ENCODE measurements at regions of chr6 and their contacts with region 1.

Region 1: GRCh38 chr6:69796642-69797390 is at the start of gene LMBRD1:
- DNase-seq: peak; percentile 98
- H3K4me3 Mint-ChIP-seq: peak within 1 kb of the TSS; percentile 83
- H3K27ac Mint-ChIP-seq: peak within 1 kb of the TSS; percentile 95
- H3K4me1 Mint-ChIP-seq: peaks cover 34% of the 10 kb centered on the region
- H3K27me3 Mint-ChIP-seq: no peaks in the 10 kb centered on the region
- total RNA-seq, gene LMBRD1: 23.5 to 30.5 TPM

Region 2: GRCh38 chr6:69622230-69622629 is 174.6 kb before region 1 on chr6:
- CTCF ChIA-PET with region 1: no interaction called
- POLR2A ChIA-PET with region 1: no interaction called
- DNase-seq: no peak
- H3K4me3 Mint-ChIP-seq: no peak overlapping the region
- H3K27ac Mint-ChIP-seq: no peak overlapping the region
- H3K4me1 Mint-ChIP-seq: no peaks in the 10 kb centered on the region
- H3K27me3 Mint-ChIP-seq: peaks cover 13% of the 10 kb centered on the region

Region 3: GRCh38 chr6:69775585-69775849 is 21.3 kb before region 1 on chr6:
- CTCF ChIA-PET with region 1: interaction called, 24 read pairs
- POLR2A ChIA-PET with region 1: no interaction called
- DNase-seq: no peak
- H3K4me3 Mint-ChIP-seq: no peak overlapping the region
- H3K27ac Mint-ChIP-seq: no peak overlapping the region
- H3K4me1 Mint-ChIP-seq: peaks cover 10% of the 10 kb centered on the region
- H3K27me3 Mint-ChIP-seq: no peaks in the 10 kb centered on the region

Region 4: DNA sequence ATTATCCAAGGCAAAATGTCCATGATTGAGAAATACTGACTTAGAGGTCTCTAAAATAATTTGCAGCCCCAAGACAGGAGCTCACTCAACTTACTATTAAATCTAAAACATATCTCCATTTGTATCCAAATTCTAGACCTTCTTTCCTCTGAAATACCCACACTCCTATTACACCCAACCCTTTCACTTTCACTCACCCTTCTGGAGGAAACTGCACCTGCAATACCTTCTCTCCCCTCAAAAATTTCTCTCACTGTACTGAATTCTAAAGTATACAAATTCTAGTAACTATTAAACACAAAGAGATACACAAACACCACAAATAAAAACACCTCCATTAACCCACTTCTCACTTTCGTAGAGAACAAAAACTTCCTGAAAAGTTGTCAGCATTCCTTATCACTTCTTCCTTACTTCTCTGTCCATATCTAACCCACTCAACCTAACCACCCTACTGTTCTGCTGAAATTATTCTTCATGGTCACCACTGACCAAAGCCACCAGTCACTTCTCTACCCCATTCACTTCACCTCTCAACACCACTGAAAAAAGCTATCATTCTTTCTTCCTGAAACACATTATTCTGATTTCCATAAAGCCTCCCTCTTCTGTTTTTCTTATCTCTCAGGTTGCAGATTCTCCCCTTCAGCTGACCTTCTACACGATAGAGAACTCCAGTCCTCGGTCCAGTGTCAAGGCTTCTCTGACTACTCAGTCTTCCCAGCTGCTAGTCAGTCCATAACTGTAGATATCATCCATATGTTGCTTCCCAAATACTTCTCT is 12.0 kb before region 1 on chr6:
- CTCF ChIA-PET with region 1: interaction called, 24 read pairs
- POLR2A ChIA-PET with region 1: no interaction called
- DNase-seq: no peak
- H3K4me3 Mint-ChIP-seq: no peak overlapping the region
- H3K27ac Mint-ChIP-seq: no peak overlapping the region
- H3K4me1 Mint-ChIP-seq: peaks cover 28% of the 10 kb centered on the region
- H3K27me3 Mint-ChIP-seq: no peaks in the 10 kb centered on the region

Region 5: DNA sequence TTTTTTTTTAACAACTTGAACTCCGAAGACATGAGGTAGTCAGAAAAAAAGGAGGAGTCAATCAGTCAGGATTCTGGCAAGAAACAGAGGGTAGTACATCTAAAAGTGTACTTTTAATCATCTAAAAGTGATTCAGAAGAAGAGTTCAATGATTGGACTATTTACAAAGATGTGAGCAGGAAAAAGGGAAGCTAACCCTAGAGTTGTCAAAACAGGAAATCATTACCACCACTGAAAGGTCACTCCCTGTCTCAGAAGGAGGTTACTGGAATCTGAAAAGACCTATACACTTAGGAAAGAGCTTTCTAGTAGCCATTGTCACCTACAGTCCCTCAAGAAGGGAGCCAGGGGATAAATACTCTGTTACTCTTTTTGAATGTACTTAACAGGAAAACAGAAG is 16.7 kb after region 1 on chr6:
- CTCF ChIA-PET with region 1: interaction called, 45 read pairs
- POLR2A ChIA-PET with region 1: no interaction called
- DNase-seq: no peak
- H3K4me3 Mint-ChIP-seq: peak overlapping the region; percentile 2
- H3K27ac Mint-ChIP-seq: peak overlapping the region; percentile 88
- H3K4me1 Mint-ChIP-seq: peaks cover 61% of the 10 kb centered on the region
- H3K27me3 Mint-ChIP-seq: no peaks in the 10 kb centered on the region

Measured in activated CD4-positive, alpha-beta T cell treated with anti-CD3 and anti-CD28 coated beads, Interleukin-2, amount 10 ng/mL, durations not matched to agents 7 days and 5 days (primary cell).